Right ventricle myocardium inferior (tissue), 1 donor: ENCODE measurements at regions of chr22 and their contacts with region 1.

Region 1: GRCh38 chr22:40759294-40759840 is 59.8 kb downstream of the SLC25A17 start:
- DNase-seq: no peak
- ATAC-seq: no peak

Region 2: DNA sequence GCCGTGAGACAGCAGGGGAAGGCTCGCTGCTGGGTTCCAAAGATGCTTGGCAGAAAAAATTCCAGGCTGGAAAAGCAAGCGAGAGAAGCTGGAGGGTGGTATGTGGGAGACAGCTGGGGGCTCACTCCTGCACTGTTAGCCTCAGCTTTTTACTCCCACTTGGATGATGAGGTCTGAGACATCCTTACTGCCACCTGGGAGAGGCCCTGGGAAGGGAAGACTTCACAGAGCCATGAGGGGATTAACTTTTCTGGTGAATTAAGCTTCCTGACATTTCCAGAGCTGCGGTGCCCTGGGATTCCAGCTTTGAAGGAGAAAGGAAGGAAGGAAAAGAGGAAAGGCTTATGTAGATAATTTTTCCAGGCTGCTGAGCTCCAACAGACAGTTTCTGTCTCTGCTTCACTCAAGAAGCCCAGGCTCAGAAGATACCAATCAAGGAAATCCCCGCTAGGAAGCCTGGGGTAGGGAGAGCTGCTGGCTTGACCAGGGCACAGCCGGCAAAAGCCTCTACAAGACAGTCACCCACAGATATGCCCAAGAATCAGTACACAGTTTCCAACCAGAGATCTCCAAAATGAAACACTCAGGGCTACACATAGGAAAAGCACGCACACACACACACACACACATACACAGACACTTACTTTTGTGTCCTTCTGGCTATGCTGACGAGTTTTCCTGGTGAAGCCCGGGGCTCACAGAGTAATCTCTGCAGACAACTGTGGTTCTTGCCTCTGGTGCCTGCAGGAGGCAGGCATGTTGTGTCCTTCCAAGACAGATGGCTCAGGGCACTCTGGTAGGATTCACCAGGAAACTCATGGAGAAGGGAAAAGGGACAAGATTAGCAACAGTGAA is 79.2 kb before region 1 on chr22:
- intact Hi-C with region 1: loop called (anchors 1 kb)
- DNase-seq: no peak
- ATAC-seq: no peak

Region 3: DNA sequence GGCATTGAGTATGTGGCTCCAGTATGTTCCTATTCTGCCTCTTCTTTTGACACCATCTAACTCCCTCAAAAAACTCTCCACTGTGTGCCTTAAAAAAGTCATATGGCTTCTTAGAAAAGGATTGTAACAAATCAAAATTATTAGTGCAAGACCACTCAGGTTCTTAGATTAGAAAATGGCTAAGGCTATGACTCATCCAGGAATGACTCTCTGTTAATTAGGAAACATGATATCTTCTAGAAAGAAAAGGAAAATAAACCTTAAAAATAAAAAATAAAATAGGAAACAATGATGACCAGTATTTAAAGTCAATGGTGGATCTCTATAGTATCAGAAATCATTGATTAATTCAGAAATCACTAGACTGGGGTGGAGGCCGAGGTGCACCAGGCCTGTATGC is 38.1 kb after region 1 on chr22:
- intact Hi-C with region 1: no loop called
- DNase-seq: no peak
- ATAC-seq: no peak

Region 4: GRCh38 chr22:40950962-40951794 is 191.8 kb after region 1 on chr22 and contains the start of gene RBX1:
- intact Hi-C with region 1: no loop called
- DNase-seq: peak; percentile 99
- ATAC-seq: peak; percentile 97
- total RNA-seq, gene RBX1: 74.1 TPM